Left cardiac atrium (tissue), 4 donors: ENCODE measurements at regions of chr11 and their contacts with region 1.

Region 1: DNA sequence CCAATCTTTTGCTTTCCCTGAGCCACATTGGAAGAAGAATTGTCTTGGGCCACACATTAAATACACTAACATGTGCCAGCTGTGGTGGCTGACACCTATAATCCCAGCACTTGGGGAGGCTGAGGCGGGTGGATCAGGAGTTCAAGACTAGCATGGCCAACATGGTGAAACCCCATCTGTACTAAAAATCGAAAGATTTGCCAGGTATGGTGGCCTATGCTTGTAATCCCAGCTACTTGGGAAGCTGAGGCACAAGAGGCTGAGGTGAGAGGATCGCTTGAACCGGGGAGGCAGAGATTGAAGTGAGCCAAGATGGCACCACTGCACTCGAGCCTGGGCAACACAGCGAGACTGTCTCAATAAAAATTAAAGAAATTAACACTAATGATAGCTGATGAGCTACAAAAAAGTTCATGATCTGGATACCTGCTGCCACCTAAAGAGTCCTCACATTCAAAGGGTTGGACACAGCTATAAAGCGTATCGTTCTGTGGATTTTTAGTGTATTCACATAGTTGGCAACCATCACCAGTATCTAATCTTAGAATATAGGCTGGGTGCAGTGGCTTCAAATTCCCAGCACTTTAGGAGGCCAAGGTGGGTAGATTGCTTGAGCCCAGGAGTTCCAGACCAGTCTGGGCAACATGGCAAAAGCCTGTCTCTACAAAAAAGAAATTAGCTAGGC is 3.4 kb upstream of the LDHC start:
- DNase-seq: no peak
- ATAC-seq: no peak

Region 2: GRCh38 chr11:18368221-18368620 is 40.5 kb before region 1 on chr11:
- intact Hi-C with region 1: loop called in 1 of 2 experiments (anchors 5 kb)
- DNase-seq: no peak
- ATAC-seq: peak in 1 of 2 donors; percentile 81